ENCODE measurements at regions of chr2 and their contacts with region 1.

Region 1: DNA sequence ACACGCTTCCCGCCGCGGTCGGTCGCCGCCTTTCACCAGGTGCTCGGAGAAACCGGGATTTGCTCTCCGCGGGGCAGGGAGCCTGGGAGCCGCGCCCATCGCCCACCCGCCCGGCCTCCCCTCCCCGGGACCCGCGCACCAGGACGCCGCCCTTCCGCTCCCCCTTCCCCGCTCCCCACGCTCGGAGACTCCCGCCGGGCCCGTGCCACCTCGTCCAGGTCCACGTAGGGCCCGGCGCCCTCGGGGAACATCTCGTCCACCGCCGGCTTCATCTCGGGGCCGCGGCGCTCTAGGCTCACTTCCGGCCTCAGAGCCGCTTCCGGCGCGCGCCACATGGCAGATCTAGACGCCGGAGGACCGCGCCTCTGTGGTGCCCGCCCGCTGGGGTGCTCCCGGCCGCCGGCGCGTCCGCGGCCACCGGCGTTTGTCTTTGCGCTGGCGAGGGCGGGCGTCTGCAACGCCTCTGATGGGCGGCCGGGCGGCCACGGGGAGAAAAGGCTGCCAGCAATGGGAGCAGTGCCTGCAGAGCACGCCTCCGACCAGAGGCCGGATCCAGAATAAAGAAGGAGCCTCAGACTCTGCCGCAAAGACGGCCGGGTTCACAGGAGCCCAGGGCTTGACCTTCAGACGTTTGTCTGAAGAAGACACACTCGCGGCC is at the start of gene COPS9:
- DNase-seq: peak; percentile 87
- ATAC-seq: peak; percentile 94
- H3K4me3 Mint-ChIP-seq: peak within 1 kb of the TSS; percentile 88
- H3K27ac Mint-ChIP-seq: peak within 1 kb of the TSS; percentile 56
- H3K4me1 Mint-ChIP-seq: peaks cover 27% of the 10 kb centered on the region
- H3K27me3 Mint-ChIP-seq: peaks cover 5% of the 10 kb centered on the region
- CTCF ChIP-seq: no peak
- total RNA-seq, gene COPS9: 78.6 and 81.1 TPM in 2 replicates

Region 2: DNA sequence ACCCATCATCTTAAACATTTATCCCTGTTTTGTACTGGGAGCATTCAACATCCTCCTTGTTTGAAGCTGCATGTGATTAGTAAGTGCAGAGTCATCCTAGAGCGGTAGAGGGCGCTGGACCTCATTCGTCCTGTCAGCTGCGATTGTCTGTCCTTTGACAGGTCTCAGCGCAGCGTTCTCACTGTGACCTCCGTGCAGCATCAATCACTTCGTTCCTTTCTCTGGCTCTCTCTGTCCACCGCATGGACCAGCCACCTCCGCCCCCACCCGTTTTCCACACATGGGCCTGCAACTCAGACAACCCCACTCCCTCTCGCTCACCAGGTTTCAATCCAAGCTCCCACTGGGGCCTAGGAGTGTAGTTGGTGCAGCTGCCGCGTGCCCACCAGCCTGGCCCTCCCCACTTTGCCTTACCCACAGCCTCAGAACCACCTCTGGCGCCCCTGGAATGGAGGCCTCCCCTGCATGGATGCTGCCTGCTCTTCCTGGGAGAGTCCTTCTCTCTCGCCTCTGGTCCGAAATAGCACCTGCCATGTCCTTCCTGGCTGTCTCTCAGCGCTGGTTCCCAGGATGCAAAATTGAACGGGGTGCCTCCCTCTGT is 201.5 kb before region 1 on chr2:
- CTCF ChIA-PET with region 1: no interaction called
- POLR2A ChIA-PET with region 1: no interaction called
- intact Hi-C with region 1: loop called (anchors 10 kb)
- DNase-seq: peak; percentile 10
- ATAC-seq: no peak
- H3K4me3 Mint-ChIP-seq: no peak overlapping the region
- H3K27ac Mint-ChIP-seq: no peak overlapping the region
- H3K4me1 Mint-ChIP-seq: no peaks in the 10 kb centered on the region
- H3K27me3 Mint-ChIP-seq: no peaks in the 10 kb centered on the region
- CTCF ChIP-seq: no peak

Region 3: GRCh38 chr2:240021488-240022104 is 114.5 kb before region 1 on chr2:
- CTCF ChIA-PET with region 1: no interaction called
- POLR2A ChIA-PET with region 1: interaction called, 10 read pairs
- intact Hi-C with region 1: loop called (anchors 1 kb)
- DNase-seq: peak; percentile 50
- ATAC-seq: peak; percentile 23
- H3K4me3 Mint-ChIP-seq: no peak overlapping the region
- H3K27ac Mint-ChIP-seq: no peak overlapping the region
- H3K4me1 Mint-ChIP-seq: peaks cover 16% of the 10 kb centered on the region
- H3K27me3 Mint-ChIP-seq: no peaks in the 10 kb centered on the region
- CTCF ChIP-seq: no peak

Region 4: GRCh38 chr2:240123821-240124644 is 12.1 kb before region 1 on chr2:
- CTCF ChIA-PET with region 1: no interaction called
- POLR2A ChIA-PET with region 1: no interaction called
- intact Hi-C with region 1: no loop called
- DNase-seq: no peak
- ATAC-seq: no peak
- H3K4me3 Mint-ChIP-seq: no peak overlapping the region
- H3K27ac Mint-ChIP-seq: no peak overlapping the region
- H3K4me1 Mint-ChIP-seq: peaks cover 4% of the 10 kb centered on the region
- H3K27me3 Mint-ChIP-seq: no peaks in the 10 kb centered on the region
- CTCF ChIP-seq: no peak